ENCODE measurements at regions of chr3 and their contacts with region 1.

Region 1: GRCh38 chr3:179451265-179452175 is at the start of gene GNB4:
- DNase-seq: peak; percentile 66
- ATAC-seq: peak; percentile 84
- H3K4me3 Mint-ChIP-seq: peak within 1 kb of the TSS; percentile 67
- H3K27ac Mint-ChIP-seq: peak within 1 kb of the TSS; percentile 55
- H3K4me1 Mint-ChIP-seq: peaks cover 19% of the 10 kb centered on the region
- H3K27me3 Mint-ChIP-seq: peaks cover 63% of the 10 kb centered on the region
- total RNA-seq, gene GNB4: 0.75 to 0.88 TPM

Region 2: DNA sequence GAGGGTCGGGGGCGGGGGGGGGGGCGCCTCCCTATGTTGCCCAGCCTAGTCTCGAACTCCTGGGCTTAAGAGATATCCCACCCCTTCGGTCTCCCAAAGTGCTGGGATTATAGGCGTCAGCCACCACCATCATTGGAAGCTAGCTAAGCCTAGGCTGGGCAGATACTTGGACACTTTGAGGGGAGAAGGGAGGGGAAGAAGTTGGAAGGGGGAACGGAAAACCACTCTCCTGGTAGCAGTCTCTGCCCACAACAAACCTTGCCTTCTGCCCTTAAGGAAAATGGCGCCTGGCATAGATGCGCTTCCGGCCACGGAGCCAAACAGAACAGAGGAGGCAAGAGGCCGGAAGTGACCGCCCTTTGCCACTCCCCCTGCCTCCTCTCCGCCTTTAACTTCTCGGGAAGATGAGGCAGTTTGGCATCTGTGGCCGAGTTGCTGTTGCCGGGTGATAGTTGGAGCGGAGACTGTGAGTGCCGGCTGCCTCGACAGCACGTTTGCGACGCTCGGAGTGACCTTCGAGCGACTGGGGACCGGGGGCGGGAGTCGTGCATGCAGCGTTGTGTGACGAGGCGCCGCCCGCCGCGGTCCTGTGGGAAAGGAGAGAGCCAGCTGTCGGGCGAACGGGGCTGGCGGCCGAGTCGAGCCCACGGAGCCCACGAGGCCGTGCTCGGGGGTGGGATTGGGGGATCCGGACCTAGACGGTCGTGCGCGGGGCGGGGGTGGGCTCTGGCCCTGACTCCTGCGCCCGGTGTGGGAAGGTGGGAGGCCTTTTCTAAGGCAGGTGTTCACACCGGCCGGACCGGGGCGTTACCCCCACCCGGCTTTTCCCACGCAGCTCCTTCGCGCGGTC is 104.0 kb before region 1 on chr3 and contains the start of gene MFN1:
- CTCF ChIA-PET with region 1: no interaction called
- POLR2A ChIA-PET with region 1: no interaction called
- intact Hi-C with region 1: loop called in 1 of 2 experiments (anchors 1 kb)
- DNase-seq: peak; percentile 94
- ATAC-seq: peak; percentile 98
- H3K4me3 Mint-ChIP-seq: peak within 1 kb of the TSS; percentile 99
- H3K27ac Mint-ChIP-seq: peak within 1 kb of the TSS; percentile 93
- H3K4me1 Mint-ChIP-seq: peaks cover 22% of the 10 kb centered on the region
- H3K27me3 Mint-ChIP-seq: no peaks in the 10 kb centered on the region
- total RNA-seq, gene MFN1: 24.4 to 30.4 TPM

Region 3: DNA sequence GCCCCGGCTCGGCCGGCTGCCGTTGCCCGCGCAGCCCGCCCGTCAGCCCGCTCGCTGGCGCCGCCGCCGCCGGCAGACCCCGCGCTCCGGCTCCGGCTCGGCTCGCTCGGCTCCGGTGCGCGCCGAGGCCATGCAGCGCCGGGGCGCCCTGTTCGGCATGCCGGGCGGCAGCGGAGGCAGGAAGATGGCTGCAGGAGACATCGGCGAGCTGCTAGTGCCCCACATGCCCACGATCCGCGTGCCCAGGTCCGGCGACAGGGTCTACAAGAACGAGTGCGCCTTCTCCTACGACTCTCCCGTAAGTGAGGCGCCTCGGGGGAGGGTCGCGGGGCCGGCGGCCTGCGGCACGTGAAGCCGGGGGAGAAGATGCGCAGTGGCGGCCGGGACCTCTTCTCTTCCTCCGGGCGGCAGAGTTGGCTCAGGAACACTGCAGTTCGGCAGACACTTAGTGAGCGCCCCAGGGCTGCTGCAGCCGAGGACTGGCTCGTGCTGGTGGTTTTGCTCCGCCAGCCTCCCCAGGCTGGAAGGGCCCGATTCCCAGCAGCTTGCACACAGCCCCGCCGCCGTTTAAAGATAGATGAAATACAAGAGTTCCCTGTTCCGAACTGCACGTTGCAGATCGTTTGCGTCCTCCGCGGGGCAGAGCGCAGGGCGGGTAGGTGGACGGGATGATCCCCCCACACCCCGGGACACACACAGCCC is 201.7 kb after region 1 on chr3:
- CTCF ChIA-PET with region 1: no interaction called
- POLR2A ChIA-PET with region 1: no interaction called
- intact Hi-C with region 1: loop called in 1 of 2 experiments (anchors 5 kb)
- DNase-seq: peak; percentile 81
- ATAC-seq: peak; percentile 69
- H3K4me3 Mint-ChIP-seq: peak overlapping the region; percentile 81
- H3K27ac Mint-ChIP-seq: peak overlapping the region; percentile 82
- H3K4me1 Mint-ChIP-seq: peaks cover 22% of the 10 kb centered on the region
- H3K27me3 Mint-ChIP-seq: peaks cover 7% of the 10 kb centered on the region